Activated CD4-positive, alpha-beta T cell treated with anti-CD3 and anti-CD28 coated beads, Interleukin-2, amount 10 ng/mL, durations not matched to agents 7 days and 5 days (primary cell): ENCODE measurements at regions of chr1 and their contacts with region 1.

Region 1: GRCh38 chr1:156860113-156860627 is 495 bp upstream of the NTRK1 start:
- DNase-seq: peak; percentile 49
- H3K4me3 Mint-ChIP-seq: peak overlapping the region; percentile 61
- H3K27ac Mint-ChIP-seq: no peak overlapping the region
- H3K4me1 Mint-ChIP-seq: peaks cover 46% of the 10 kb centered on the region
- H3K27me3 Mint-ChIP-seq: peaks cover 44% of the 10 kb centered on the region

Region 2: DNA sequence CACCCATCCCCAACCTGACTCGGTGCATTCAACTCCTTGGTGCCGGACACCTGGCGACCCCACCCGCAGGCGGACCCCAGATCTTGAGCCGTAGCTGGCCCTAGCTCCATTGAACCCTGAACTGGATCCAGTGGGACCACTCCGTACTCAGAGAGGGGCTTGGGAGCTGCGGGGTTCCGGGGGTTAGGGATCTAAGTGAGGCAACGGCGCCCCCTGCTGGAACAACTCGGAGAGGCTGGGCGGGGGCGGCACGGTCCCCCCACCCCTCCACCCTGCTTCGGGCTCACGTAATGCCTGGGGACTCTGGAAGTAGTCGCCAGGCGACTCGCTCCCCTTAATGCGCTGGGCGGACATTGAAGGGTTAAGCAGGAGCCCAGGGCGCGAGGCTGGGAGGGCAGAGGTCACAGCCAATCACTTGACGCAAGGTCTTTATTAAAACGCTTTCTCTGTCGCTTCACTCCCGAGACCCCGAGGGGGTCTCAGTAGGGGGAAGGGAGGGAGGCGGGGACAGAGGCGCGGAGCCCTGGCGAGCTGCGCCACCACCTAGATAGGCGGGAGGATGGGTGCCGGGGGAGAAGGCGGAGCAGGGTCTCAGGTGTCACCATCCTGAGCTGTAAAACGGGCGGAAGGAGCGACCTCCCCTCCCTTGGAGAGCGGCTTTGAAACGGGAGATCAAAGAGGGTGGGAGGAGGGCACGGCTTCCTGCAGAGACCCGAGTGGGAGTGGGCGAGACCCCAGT is 154.1 kb before region 1 on chr1:
- CTCF ChIA-PET with region 1: interaction called, 14 read pairs
- POLR2A ChIA-PET with region 1: no interaction called
- DNase-seq: peak; percentile 65
- H3K4me3 Mint-ChIP-seq: peak overlapping the region; percentile 71
- H3K27ac Mint-ChIP-seq: no peak overlapping the region
- H3K4me1 Mint-ChIP-seq: peaks cover 25% of the 10 kb centered on the region
- H3K27me3 Mint-ChIP-seq: peaks cover 38% of the 10 kb centered on the region

Region 3: GRCh38 chr1:156797212-156797871 is 62.8 kb before region 1 on chr1:
- CTCF ChIA-PET with region 1: interaction called, 247 read pairs
- POLR2A ChIA-PET with region 1: interaction called, 3 read pairs
- DNase-seq: peak; percentile 77
- H3K4me3 Mint-ChIP-seq: no peak overlapping the region
- H3K27ac Mint-ChIP-seq: no peak overlapping the region
- H3K4me1 Mint-ChIP-seq: peaks cover 20% of the 10 kb centered on the region
- H3K27me3 Mint-ChIP-seq: no peaks in the 10 kb centered on the region

Region 4: GRCh38 chr1:156821801-156822200 is 38.4 kb before region 1 on chr1:
- CTCF ChIA-PET with region 1: interaction called, 21 read pairs
- POLR2A ChIA-PET with region 1: no interaction called
- DNase-seq: no peak
- H3K4me3 Mint-ChIP-seq: no peak overlapping the region
- H3K27ac Mint-ChIP-seq: no peak overlapping the region
- H3K4me1 Mint-ChIP-seq: peaks cover 30% of the 10 kb centered on the region
- H3K27me3 Mint-ChIP-seq: peaks cover 6% of the 10 kb centered on the region

Region 5: GRCh38 chr1:156876281-156876680 is 16.1 kb after region 1 on chr1:
- CTCF ChIA-PET with region 1: interaction called, 60 read pairs
- POLR2A ChIA-PET with region 1: no interaction called
- DNase-seq: no peak
- H3K4me3 Mint-ChIP-seq: no peak overlapping the region
- H3K27ac Mint-ChIP-seq: no peak overlapping the region
- H3K4me1 Mint-ChIP-seq: no peaks in the 10 kb centered on the region
- H3K27me3 Mint-ChIP-seq: peaks cover 23% of the 10 kb centered on the region

Region 6: GRCh38 chr1:156987715-156988114 is 127.5 kb after region 1 on chr1:
- CTCF ChIA-PET with region 1: no interaction called
- POLR2A ChIA-PET with region 1: no interaction called
- DNase-seq: no peak
- H3K4me3 Mint-ChIP-seq: no peak overlapping the region
- H3K27ac Mint-ChIP-seq: no peak overlapping the region
- H3K4me1 Mint-ChIP-seq: peaks cover 10% of the 10 kb centered on the region
- H3K27me3 Mint-ChIP-seq: peaks cover 37% of the 10 kb centered on the region